Motor neuron (in vitro differentiated cells): ENCODE measurements at regions of chr18 and their contacts with region 1.

Region 1: DNA sequence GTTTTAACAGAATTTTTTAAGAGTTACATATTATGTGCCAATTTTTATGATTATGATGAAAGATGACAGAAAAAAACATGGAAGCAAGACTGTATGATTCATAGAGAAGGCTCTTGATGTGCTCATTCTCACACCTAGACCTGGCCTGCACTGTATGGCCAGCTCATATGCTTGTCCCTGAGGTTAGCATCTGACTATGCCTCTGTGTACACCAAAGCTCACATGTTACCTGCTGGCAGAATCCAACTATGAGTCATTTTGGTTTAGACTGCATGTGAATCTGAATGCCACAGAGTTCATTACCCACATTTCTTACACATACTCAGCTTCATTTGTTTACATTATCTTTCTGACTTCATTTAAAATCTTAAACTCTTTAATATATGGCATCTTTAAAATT is 139.0 kb downstream of the DSC3 start:
- ATAC-seq: peak in 1 of 8 experiments; percentile 35
- H3K4me3 ChIP-seq: no peak overlapping the region
- H3K27ac ChIP-seq: no peak overlapping the region
- H3K4me1 ChIP-seq: no peaks in the 10 kb centered on the region

Region 2: DNA sequence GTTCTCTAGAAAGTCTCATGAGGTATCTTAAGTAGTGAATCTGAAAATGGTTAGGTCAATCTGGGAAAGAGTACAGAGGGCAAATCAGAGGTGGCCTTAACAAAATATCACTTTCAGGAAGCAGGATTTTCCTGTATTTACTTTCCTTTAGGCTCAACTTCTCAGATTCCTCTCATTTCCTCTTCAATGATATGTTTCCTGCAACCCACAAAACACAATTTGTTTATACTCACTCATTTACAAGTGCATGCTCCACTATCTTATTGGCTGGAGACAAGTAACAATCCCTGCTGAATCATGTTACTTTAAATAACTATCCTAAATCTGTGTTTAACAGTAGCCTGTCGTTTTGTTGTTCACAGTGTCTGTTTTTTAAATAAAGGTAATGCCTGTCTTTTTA is 89.1 kb before region 1 on chr18:
- in situ Hi-C with region 1: loop called in 1 of 9 experiments (anchors 25 kb)
- ATAC-seq: no peak
- H3K4me3 ChIP-seq: no peak overlapping the region
- H3K27ac ChIP-seq: no peak overlapping the region
- H3K4me1 ChIP-seq: peaks cover 0 to 15% of the 10 kb centered on the region in 2 donors